ENCODE measurements at regions of chr9 and their contacts with region 1.

Region 1: DNA sequence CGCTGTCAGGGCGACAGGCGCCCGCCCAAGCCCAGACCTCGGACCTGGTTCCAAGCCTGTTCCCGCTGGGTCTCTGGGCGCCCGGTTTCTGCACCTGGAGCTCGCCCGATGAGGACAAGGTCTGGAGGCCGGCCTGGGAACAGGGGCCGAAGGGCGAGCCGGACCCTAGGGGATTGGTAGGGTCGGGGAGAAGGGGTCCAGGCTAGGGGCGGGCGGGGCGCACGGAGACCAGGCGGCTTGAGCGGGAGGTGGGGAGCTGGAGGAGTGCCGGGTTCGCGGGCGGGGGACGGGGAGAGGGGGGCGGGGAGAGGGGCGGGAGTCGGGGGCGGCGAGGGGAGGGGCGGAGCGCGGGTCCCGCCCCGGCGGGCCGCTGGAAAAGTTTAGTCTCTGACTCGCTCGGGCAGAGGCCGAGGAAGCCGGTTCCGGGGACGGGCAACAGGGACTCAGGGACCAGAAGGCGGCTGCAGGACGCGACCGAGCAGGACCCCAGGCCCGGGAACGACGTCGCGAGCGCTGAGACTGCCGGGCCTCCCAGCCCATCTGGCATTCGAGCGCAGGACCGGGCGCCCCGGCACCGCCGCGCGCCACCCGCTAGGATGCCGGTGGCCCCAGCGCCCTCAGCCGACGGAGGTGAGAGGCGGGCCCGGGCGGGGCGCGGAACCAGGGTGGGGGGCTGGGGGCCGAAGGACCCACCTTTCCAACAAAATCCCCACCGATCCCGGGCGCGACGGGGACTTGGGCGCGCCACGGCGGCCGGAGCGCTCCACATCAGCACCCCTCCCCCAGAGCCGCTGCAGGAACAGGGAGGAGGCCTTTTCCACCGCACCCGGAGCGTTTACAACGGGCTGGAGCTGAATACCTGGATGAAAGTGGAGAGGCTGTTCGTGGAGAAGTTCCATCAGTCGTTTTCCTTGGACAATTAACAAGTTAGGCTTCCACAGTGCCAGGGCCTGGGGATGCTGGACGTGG is at the start of gene S1PR3:
- DNase-seq: no peak
- ATAC-seq: peak; percentile 80
- H3K4me3 ChIP-seq: peak within 1 kb of the TSS; percentile 64
- H3K27ac ChIP-seq: peak within 1 kb of the TSS; percentile 67
- H3K4me1 ChIP-seq: peaks cover 17% of the 10 kb centered on the region
- H3K27me3 ChIP-seq: no peaks in the 10 kb centered on the region
- CTCF ChIP-seq: no peak
- POLR2A ChIP-seq: peak; percentile 64
- RAD21 ChIP-seq: no peak
- total RNA-seq, gene S1PR3: 28.7 and 31.1 TPM in 2 replicates

Region 2: GRCh38 chr9:88583901-88584596 is 407.3 kb before region 1 on chr9:
- CTCF ChIA-PET with region 1: no interaction called
- POLR2A ChIA-PET with region 1: no interaction called
- dilution Hi-C with region 1: no loop called
- in situ Hi-C with region 1: no loop called
- intact Hi-C with region 1: loop called (anchors 2 kb)
- DNase-seq: peak; percentile 85
- ATAC-seq: peak; percentile 83
- H3K4me3 ChIP-seq: no peak overlapping the region
- H3K27ac ChIP-seq: peak overlapping the region; percentile 60; the same call in 1 of the 2 replicates
- H3K4me1 ChIP-seq: peaks cover 7% of the 10 kb centered on the region
- H3K27me3 ChIP-seq: no peaks in the 10 kb centered on the region
- CTCF ChIP-seq: peak; percentile 9; the same call in 1 of the 2 replicates
- POLR2A ChIP-seq: no peak
- RAD21 ChIP-seq: peak; percentile 20; the same call in 1 of the 2 replicates

Region 3: GRCh38 chr9:88645172-88645878 is 346.0 kb before region 1 on chr9:
- CTCF ChIA-PET with region 1: no interaction called
- POLR2A ChIA-PET with region 1: no interaction called
- dilution Hi-C with region 1: loop called (anchors 25 kb)
- in situ Hi-C with region 1: no loop called
- intact Hi-C with region 1: no loop called
- DNase-seq: peak; percentile 45
- ATAC-seq: peak; percentile 83
- H3K4me3 ChIP-seq: no peak overlapping the region; the same call in 1 of the 2 replicates
- H3K27ac ChIP-seq: peak overlapping the region; percentile 47; the same call in 1 of the 2 replicates
- H3K4me1 ChIP-seq: peaks cover 11% of the 10 kb centered on the region
- H3K27me3 ChIP-seq: no peaks in the 10 kb centered on the region
- CTCF ChIP-seq: no peak
- POLR2A ChIP-seq: no peak
- RAD21 ChIP-seq: no peak

Region 4: GRCh38 chr9:88660611-88661010 is 330.7 kb before region 1 on chr9:
- CTCF ChIA-PET with region 1: no interaction called
- POLR2A ChIA-PET with region 1: no interaction called
- dilution Hi-C with region 1: no loop called
- in situ Hi-C with region 1: no loop called
- intact Hi-C with region 1: loop called (anchors 2 kb)
- DNase-seq: peak; percentile 43
- ATAC-seq: peak; percentile 71
- H3K4me3 ChIP-seq: no peak overlapping the region
- H3K27ac ChIP-seq: no peak overlapping the region
- H3K4me1 ChIP-seq: peaks cover 7% of the 10 kb centered on the region
- H3K27me3 ChIP-seq: no peaks in the 10 kb centered on the region; the same call in 1 of the 2 replicates
- CTCF ChIP-seq: peak; percentile 53
- POLR2A ChIP-seq: no peak
- RAD21 ChIP-seq: peak; percentile 68

Region 5: DNA sequence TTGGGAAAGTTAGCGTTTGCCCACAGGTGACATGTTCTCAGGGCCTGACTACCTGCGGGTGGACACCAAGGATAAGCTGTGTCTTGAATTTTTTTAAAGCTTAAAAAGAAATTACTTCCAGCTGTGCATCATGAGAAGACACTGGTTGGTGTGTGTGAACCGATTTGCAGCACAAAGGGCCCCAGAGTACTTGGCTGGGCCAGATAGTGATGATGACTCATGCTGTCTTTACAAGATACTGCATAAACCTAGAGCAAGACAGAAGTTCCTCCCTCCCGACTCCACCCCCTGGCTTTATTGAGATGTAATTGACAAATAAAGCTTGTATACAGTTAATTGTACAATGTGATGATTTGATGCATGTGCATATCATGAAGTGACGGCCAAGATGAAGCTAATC is 243.6 kb before region 1 on chr9:
- CTCF ChIA-PET with region 1: interaction called, 3 read pairs
- POLR2A ChIA-PET with region 1: no interaction called
- dilution Hi-C with region 1: no loop called
- in situ Hi-C with region 1: no loop called
- intact Hi-C with region 1: loop called (anchors 2 kb)
- DNase-seq: peak; percentile 96
- ATAC-seq: peak; percentile 50
- H3K4me3 ChIP-seq: no peak overlapping the region
- H3K27ac ChIP-seq: peak overlapping the region; percentile 93
- H3K4me1 ChIP-seq: peaks cover 35% of the 10 kb centered on the region
- H3K27me3 ChIP-seq: no peaks in the 10 kb centered on the region
- CTCF ChIP-seq: no peak
- POLR2A ChIP-seq: no peak
- RAD21 ChIP-seq: peak; percentile 10; the same call in 1 of the 2 replicates

Region 6: GRCh38 chr9:88837731-88838130 is 153.6 kb before region 1 on chr9:
- CTCF ChIA-PET with region 1: no interaction called
- POLR2A ChIA-PET with region 1: no interaction called
- dilution Hi-C with region 1: no loop called
- in situ Hi-C with region 1: no loop called
- intact Hi-C with region 1: loop called (anchors 1 kb)
- DNase-seq: peak; percentile 39
- ATAC-seq: no peak
- H3K4me3 ChIP-seq: no peak overlapping the region
- H3K27ac ChIP-seq: no peak overlapping the region
- H3K4me1 ChIP-seq: peaks cover 4% of the 10 kb centered on the region
- H3K27me3 ChIP-seq: no peaks in the 10 kb centered on the region
- CTCF ChIP-seq: no peak
- POLR2A ChIP-seq: no peak
- RAD21 ChIP-seq: no peak

Region 7: DNA sequence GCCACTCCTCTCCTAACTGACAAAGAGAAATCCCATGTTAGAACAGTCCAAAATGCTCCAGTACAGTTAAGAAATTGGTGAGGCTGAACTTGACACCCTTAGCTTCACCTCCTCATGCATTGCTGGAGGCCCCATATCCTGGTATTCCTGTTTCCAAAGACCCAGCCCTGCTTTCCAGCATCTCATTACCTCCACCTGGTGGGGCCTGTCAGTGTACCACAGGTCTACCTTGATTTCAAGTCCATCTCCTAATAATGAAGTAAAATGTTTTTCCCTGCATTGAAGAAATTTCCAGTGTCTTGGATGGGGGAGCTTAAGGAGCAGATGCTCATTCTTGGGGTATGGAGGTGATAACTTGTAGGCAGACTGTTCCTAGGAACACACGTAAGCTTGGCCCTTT is 70.7 kb before region 1 on chr9:
- CTCF ChIA-PET with region 1: no interaction called
- POLR2A ChIA-PET with region 1: no interaction called
- dilution Hi-C with region 1: no loop called
- in situ Hi-C with region 1: no loop called
- intact Hi-C with region 1: no loop called
- DNase-seq: no peak
- ATAC-seq: no peak
- H3K4me3 ChIP-seq: no peak overlapping the region
- H3K27ac ChIP-seq: no peak overlapping the region
- H3K4me1 ChIP-seq: no peaks in the 10 kb centered on the region
- H3K27me3 ChIP-seq: peaks cover 9% of the 10 kb centered on the region; the same call in 1 of the 2 replicates
- CTCF ChIP-seq: no peak
- POLR2A ChIP-seq: no peak
- RAD21 ChIP-seq: no peak

Region 8: GRCh38 chr9:89052470-89053097 is 61.2 kb after region 1 on chr9:
- CTCF ChIA-PET with region 1: no interaction called
- POLR2A ChIA-PET with region 1: no interaction called
- dilution Hi-C with region 1: no loop called
- in situ Hi-C with region 1: no loop called
- intact Hi-C with region 1: no loop called
- DNase-seq: no peak
- ATAC-seq: no peak
- H3K4me3 ChIP-seq: no peak overlapping the region
- H3K27ac ChIP-seq: no peak overlapping the region
- H3K4me1 ChIP-seq: no peaks in the 10 kb centered on the region
- H3K27me3 ChIP-seq: no peaks in the 10 kb centered on the region
- CTCF ChIP-seq: no peak
- POLR2A ChIP-seq: no peak
- RAD21 ChIP-seq: no peak

Region 9: GRCh38 chr9:89138463-89139390 is 147.4 kb after region 1 on chr9:
- CTCF ChIA-PET with region 1: no interaction called
- POLR2A ChIA-PET with region 1: no interaction called
- dilution Hi-C with region 1: no loop called
- in situ Hi-C with region 1: no loop called
- intact Hi-C with region 1: no loop called
- DNase-seq: peak; percentile 71
- ATAC-seq: peak; percentile 66
- H3K4me3 ChIP-seq: no peak overlapping the region
- H3K27ac ChIP-seq: peak overlapping the region; percentile 84
- H3K4me1 ChIP-seq: peaks cover 26% of the 10 kb centered on the region
- H3K27me3 ChIP-seq: no peaks in the 10 kb centered on the region
- CTCF ChIP-seq: no peak
- POLR2A ChIP-seq: no peak
- RAD21 ChIP-seq: no peak

Measured in IMR-90 (cell line).